ENCODE measurements at regions of chr2 and their contacts with region 1.

Region 1: DNA sequence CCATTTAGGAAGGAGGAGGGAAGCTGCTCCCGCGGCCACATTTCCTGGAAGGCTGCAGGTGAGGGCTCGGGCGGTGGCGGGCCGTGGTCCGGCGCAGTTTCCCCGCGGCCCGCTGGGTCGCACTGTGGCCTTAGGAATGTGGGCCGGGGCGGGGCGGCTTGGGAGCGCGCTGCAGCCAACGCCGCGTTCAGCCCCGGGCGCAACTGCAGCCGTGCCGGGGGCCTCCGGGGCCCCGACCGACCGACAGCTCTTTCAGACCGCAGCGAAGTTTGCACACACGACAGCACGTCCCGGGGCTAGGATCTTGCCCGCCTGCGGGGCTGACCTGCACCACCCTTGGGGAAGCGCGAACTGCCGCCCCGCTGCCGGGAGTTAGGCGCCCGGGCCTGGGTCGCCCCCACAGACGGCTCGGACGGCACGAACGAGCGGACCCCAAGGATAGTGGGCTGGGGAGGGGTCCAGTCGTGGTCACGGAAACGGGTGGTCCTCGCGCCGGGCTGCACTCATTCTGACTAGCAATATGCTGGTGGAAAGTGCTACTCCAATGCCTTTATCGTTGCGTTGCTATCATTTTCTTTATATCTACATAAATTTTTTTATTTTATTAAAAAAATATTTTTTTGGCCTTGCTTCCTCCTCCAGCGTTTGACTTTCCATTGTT is 69.9 kb upstream of the DLX2 start:
- DNase-seq: peak; percentile 10 to 84 (median 62)
- ATAC-seq: peak; percentile 94
- H3K4me3 ChIP-seq: peak overlapping the region; percentile 57 to 66
- H3K4me3 Mint-ChIP-seq: peak overlapping the region; percentile 68
- H3K27ac ChIP-seq: no peak overlapping the region
- H3K27ac Mint-ChIP-seq: no peak overlapping the region
- H3K4me1 ChIP-seq: peaks cover 4% of the 10 kb centered on the region
- H3K4me1 Mint-ChIP-seq: peaks cover 5% of the 10 kb centered on the region
- H3K27me3 ChIP-seq: no peaks in the 10 kb centered on the region
- H3K27me3 Mint-ChIP-seq: no peaks in the 10 kb centered on the region
- CTCF ChIP-seq: peak; percentile 44

Region 2: DNA sequence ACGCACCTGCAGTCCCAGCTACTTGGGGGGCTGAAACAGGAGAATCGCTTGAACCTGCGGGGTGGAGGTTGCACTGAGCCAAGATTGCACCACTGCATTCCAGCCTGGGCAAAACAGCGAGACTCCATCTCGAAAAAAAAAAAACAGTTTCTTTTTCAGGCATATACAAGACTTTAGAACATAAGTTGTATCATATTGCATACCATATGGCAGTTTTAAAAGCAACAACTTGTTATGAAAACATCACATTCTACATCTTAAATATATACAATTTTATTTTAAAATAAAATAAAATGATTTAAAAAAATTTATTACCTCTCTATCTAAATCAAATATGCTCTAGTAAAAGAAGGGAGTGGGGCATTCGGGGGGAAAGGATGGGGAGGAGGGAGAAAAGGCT is 1496.9 kb before region 1 on chr2:
- CTCF ChIA-PET with region 1: no interaction called
- POLR2A ChIA-PET with region 1: no interaction called
- intact Hi-C with region 1: no loop called
- DNase-seq: no peak
- ATAC-seq: no peak
- H3K4me3 ChIP-seq: no peak overlapping the region
- H3K4me3 Mint-ChIP-seq: no peak overlapping the region
- H3K27ac ChIP-seq: no peak overlapping the region
- H3K27ac Mint-ChIP-seq: no peak overlapping the region
- H3K4me1 ChIP-seq: no peaks in the 10 kb centered on the region
- H3K4me1 Mint-ChIP-seq: peaks cover 9% of the 10 kb centered on the region
- H3K27me3 ChIP-seq: peaks cover 0 to 2% of the 10 kb centered on the region in 2 experiments
- H3K27me3 Mint-ChIP-seq: no peaks in the 10 kb centered on the region
- CTCF ChIP-seq: no peak

Region 3: DNA sequence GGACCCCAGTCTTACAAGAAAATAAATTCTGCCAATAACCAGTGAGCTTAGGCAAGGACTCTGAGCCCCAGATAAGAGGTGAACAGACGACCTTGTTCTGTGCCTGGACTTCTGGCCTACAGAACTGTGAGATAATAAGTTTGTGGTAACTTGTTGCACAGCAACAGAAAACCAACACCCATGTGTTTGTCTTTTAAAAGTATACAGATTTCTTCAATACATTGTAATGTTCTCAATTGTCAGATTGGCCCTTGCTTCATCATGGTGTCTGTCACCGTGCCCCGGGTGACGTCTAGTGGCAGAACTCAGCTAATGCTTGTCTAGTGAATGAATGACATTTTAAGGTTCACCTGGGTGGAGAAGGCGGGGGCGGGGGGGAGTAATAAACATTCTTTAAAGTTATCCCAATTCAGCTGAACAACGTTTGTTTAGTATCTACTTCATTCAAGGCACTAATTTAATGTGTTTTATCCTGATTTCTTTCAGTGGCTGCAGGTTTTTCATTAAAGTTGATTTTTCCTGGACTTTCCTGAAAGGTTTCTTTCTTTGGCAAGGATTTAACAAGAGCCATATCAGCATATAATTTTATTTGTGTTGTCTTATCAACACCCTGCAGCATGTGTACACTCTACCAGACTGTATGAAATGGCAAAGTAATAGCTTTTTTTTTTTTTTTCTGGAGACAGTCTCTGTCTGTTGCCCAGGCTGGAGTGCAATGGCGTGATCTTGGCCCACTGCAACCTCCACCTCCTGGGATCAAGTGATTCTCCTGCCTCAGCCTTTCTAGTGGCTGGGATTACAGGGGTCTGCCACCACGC is 53.8 kb after region 1 on chr2:
- CTCF ChIA-PET with region 1: interaction called, 7 read pairs
- POLR2A ChIA-PET with region 1: no interaction called
- intact Hi-C with region 1: loop called in 1 of 2 experiments (anchors 10 kb)
- DNase-seq: peak in 5 of 9 experiments; percentile 12 to 50 (median 46)
- ATAC-seq: peak; percentile 72
- H3K4me3 ChIP-seq: no peak overlapping the region
- H3K4me3 Mint-ChIP-seq: no peak overlapping the region
- H3K27ac ChIP-seq: no peak overlapping the region
- H3K27ac Mint-ChIP-seq: no peak overlapping the region
- H3K4me1 ChIP-seq: peaks cover 23% of the 10 kb centered on the region
- H3K4me1 Mint-ChIP-seq: peaks cover 26% of the 10 kb centered on the region
- H3K27me3 ChIP-seq: no peaks in the 10 kb centered on the region
- H3K27me3 Mint-ChIP-seq: no peaks in the 10 kb centered on the region
- CTCF ChIP-seq: no peak

Region 4: GRCh38 chr2:172484253-172484652 is 311.6 kb after region 1 on chr2:
- CTCF ChIA-PET with region 1: interaction called, 35 read pairs
- POLR2A ChIA-PET with region 1: no interaction called
- intact Hi-C with region 1: loop called (anchors 1 to 5 kb)
- DNase-seq: peak in 2 of 9 experiments; percentile 41 to 62
- ATAC-seq: peak; percentile 63
- H3K4me3 ChIP-seq: no peak overlapping the region
- H3K4me3 Mint-ChIP-seq: peak overlapping the region; percentile 15
- H3K27ac ChIP-seq: no peak overlapping the region
- H3K27ac Mint-ChIP-seq: peak overlapping the region; percentile 75
- H3K4me1 ChIP-seq: peaks cover 55% of the 10 kb centered on the region
- H3K4me1 Mint-ChIP-seq: peaks cover 68% of the 10 kb centered on the region
- H3K27me3 ChIP-seq: no peaks in the 10 kb centered on the region
- H3K27me3 Mint-ChIP-seq: no peaks in the 10 kb centered on the region
- CTCF ChIP-seq: peak; percentile 44